ENCODE measurements at regions of chr19 and their contacts with region 1.

Region 1: GRCh38 chr19:41308392-41309179 is 1.4 kb upstream of the CCDC97 start:
- DNase-seq: peak; percentile 99
- H3K4me3 ChIP-seq: peak overlapping the region; percentile 74 to 94 (median 78)
- H3K27ac ChIP-seq: peak overlapping the region; percentile 88 to 98 (median 95)
- H3K4me1 ChIP-seq: peaks cover 30 to 50% (median 43%) of the 10 kb centered on the region in 4 donors
- H3K27me3 ChIP-seq: no peaks in the 10 kb centered on the region
- CTCF ChIP-seq: peak; percentile 95 to 99 (median 97)
- EP300 ChIP-seq: no peak
- POLR2A ChIP-seq: peak; percentile 22

Region 2: DNA sequence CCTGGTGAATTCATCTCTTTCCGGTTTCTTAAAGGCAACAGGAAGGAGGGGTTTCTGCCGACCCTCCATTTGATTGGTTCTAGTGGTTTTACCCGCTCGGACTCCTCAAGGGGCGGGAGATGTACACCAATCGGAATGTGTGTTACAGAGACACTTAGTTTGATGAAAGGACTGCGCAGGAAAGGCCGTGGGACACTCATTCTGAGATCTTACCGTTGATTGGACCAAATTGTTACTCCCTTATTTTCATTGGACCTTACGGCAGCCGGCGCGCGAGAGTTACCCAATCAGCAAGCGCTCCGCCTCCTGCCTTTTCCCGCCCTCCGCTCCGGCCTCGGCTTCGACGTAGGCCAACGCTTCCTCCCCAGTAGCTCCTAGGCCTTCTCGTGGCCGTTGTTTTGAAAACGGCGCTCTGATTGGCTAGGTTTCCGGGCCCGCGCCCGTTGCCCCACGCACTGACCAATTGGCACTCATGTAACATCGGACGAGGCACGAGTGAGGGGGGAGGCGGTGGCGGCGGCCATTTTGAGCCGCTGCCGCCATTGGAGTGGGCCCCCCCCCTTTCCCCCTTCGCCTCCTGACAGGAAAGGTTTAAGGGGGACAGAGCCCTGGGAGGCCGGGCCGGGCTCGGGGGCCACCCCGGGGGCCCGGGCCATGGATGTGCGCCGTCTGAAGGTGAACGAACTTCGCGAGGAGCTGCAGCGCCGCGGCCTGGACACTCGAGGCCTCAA is 44.6 kb before region 1 on chr19 and contains the start of gene HNRNPUL1:
- intact Hi-C with region 1: loop called (anchors 2 kb)
- DNase-seq: peak; percentile 100
- H3K4me3 ChIP-seq: peak within 1 kb of the TSS; percentile 86 to 100 (median 92)
- H3K27ac ChIP-seq: peak within 1 kb of the TSS; percentile 99 to 100 (median 99)
- H3K4me1 ChIP-seq: peaks cover 34 to 44% (median 40%) of the 10 kb centered on the region in 4 donors
- H3K27me3 ChIP-seq: no peaks in the 10 kb centered on the region
- CTCF ChIP-seq: peak in 2 of 3 experiments; percentile 16 to 24
- EP300 ChIP-seq: no peak
- POLR2A ChIP-seq: no peak
- total RNA-seq, gene HNRNPUL1: 148 to 207 (median 179) TPM